WTC11 (cell line): ENCODE measurements at regions of chr12 and their contacts with region 1.

Region 1: GRCh38 chr12:64696080-64696741 is 63.0 kb downstream of the GNS start:
- DNase-seq: no peak
- ATAC-seq: no peak
- H3K4me3 Mint-ChIP-seq: no peak overlapping the region
- H3K27ac Mint-ChIP-seq: no peak overlapping the region
- H3K4me1 Mint-ChIP-seq: peaks cover 39% of the 10 kb centered on the region
- H3K27me3 Mint-ChIP-seq: no peaks in the 10 kb centered on the region
- CTCF ChIP-seq: no peak

Region 2: GRCh38 chr12:64212119-64212746 is 484.0 kb before region 1 on chr12:
- CTCF ChIA-PET with region 1: no interaction called
- POLR2A ChIA-PET with region 1: no interaction called
- DNase-seq: no peak
- ATAC-seq: no peak
- H3K4me3 Mint-ChIP-seq: no peak overlapping the region
- H3K27ac Mint-ChIP-seq: no peak overlapping the region
- H3K4me1 Mint-ChIP-seq: no peaks in the 10 kb centered on the region
- H3K27me3 Mint-ChIP-seq: no peaks in the 10 kb centered on the region
- CTCF ChIP-seq: no peak

Region 3: DNA sequence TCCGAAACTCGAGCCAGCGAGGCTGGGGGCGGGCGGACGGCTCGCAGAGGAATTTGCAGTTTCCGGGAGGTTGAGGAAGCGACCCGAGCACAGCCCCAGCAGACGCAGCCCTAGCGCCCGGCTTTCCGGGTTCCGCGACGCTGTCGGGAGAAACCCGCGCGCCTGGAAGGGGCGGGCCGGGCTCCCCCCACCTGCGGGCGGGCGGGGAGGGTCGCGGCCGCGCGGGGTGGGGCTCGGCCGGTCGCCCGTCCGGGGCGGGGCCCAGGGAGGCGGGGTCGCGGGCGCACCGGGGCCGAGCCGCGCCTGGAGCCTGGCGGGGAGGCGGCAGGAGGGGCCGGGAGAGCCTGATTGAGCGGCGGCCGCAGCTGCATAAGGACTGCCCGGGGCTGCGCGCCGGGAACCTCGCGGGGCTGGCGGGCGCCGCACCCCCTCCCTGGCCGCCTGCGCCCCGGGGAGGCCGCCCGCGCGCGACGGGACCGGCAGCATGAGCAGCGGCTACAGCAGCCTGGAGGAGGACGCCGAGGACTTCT is 86.0 kb before region 1 on chr12 and contains the start of gene RASSF3:
- CTCF ChIA-PET with region 1: interaction called, 11 read pairs
- POLR2A ChIA-PET with region 1: interaction called, 3 read pairs
- DNase-seq: peak; percentile 85
- ATAC-seq: peak; percentile 79
- H3K4me3 Mint-ChIP-seq: peak within 1 kb of the TSS; percentile 94
- H3K27ac Mint-ChIP-seq: peak within 1 kb of the TSS; percentile 97
- H3K4me1 Mint-ChIP-seq: peaks cover 31% of the 10 kb centered on the region
- H3K27me3 Mint-ChIP-seq: no peaks in the 10 kb centered on the region
- CTCF ChIP-seq: no peak
- total RNA-seq, gene RASSF3: 45.2 to 54.7 TPM (median 50.2 TPM) in 3 replicates

Region 4: GRCh38 chr12:64706306-64706705 is 10.1 kb after region 1 on chr12:
- CTCF ChIA-PET with region 1: interaction called, 14 read pairs
- POLR2A ChIA-PET with region 1: no interaction called
- DNase-seq: no peak
- ATAC-seq: no peak
- H3K4me3 Mint-ChIP-seq: no peak overlapping the region
- H3K27ac Mint-ChIP-seq: no peak overlapping the region
- H3K4me1 Mint-ChIP-seq: no peaks in the 10 kb centered on the region
- H3K27me3 Mint-ChIP-seq: no peaks in the 10 kb centered on the region; the same call in 1 of the 2 replicates
- CTCF ChIP-seq: no peak

Region 5: GRCh38 chr12:64810831-64811230 is 114.6 kb after region 1 on chr12:
- CTCF ChIA-PET with region 1: no interaction called
- POLR2A ChIA-PET with region 1: no interaction called
- DNase-seq: no peak
- ATAC-seq: no peak
- H3K4me3 Mint-ChIP-seq: no peak overlapping the region
- H3K27ac Mint-ChIP-seq: no peak overlapping the region
- H3K4me1 Mint-ChIP-seq: no peaks in the 10 kb centered on the region
- H3K27me3 Mint-ChIP-seq: no peaks in the 10 kb centered on the region; the same call in 1 of the 2 replicates
- CTCF ChIP-seq: no peak